Ascending aorta (tissue), 2 donors: ENCODE measurements at regions of chr10 and their contacts with region 1.

Region 1: GRCh38 chr10:95246579-95247051 is 44.2 kb downstream of the PDLIM1 start:
- DNase-seq: peak in 1 of 2 donors; percentile 89
- H3K4me3 ChIP-seq: no peak overlapping the region
- H3K27ac ChIP-seq: peak overlapping the region; percentile 70 to 82
- H3K4me1 ChIP-seq: peaks cover 8 to 46% of the 10 kb centered on the region in 2 donors
- H3K27me3 ChIP-seq: no peaks in the 10 kb centered on the region
- CTCF ChIP-seq: peak; percentile 62 to 73 (median 67)

Region 2: GRCh38 chr10:95183271-95184230 is 63.1 kb before region 1 on chr10:
- intact Hi-C with region 1: loop called (anchors 2 kb)
- DNase-seq: peak in 1 of 2 donors; percentile 92
- H3K4me3 ChIP-seq: peak overlapping the region; percentile 75 to 79
- H3K27ac ChIP-seq: peak overlapping the region; percentile 81 to 85
- H3K4me1 ChIP-seq: no peaks in the 10 kb centered on the region
- H3K27me3 ChIP-seq: no peaks in the 10 kb centered on the region
- CTCF ChIP-seq: peak; percentile 91 to 95 (median 93)

Region 3: DNA sequence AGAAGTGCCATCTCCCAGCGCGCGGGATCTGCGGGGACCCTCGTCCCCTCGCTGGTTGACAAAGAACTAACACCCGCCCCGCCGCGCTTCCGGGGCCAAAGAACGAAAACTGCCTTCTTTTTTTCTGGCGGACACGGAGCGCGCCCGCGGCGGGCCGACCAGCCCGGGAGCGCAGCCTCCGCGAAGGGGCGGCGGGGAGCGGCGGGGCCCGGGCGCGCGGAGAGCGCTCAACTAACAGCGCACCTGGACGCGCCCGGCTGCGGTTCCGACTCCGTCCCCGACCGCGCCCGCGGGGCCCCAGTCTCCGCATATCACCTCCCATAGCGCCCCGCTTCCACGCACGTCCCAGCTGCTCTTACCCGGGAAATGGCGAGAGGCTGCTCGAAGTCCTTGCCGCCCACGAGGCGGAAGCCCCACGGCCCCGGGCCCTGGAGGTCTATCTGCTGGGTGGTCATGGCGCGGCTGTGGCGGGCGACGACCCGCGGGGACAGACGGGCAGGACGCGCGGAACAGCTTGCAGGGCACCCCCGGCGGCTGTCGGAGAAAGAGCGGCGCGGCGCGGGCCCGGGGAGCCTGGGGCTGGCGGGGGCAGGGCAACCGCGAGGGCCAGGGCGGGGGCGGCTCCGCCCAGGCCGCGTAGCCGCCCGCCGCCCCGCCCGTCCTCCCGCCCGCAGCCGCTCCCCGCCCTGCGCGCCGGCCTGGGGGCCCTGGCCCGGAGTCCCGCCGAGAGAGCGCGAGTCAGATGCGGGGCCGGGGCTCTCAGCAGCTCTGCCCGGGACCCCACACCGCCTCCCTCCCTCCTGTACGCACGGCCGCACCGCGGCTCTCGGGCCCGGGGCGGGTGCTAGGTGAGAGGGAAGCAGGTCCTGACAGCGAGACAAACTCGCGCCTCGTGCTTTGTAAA is 44.1 kb after region 1 on chr10 and contains the start of gene PDLIM1:
- intact Hi-C with region 1: loop called (anchors 1 kb)
- DNase-seq: peak in 1 of 2 donors; percentile 86
- H3K4me3 ChIP-seq: peak within 1 kb of the TSS; percentile 98 to 99
- H3K27ac ChIP-seq: peak within 1 kb of the TSS; percentile 88 to 89
- H3K4me1 ChIP-seq: peaks cover 8 to 35% of the 10 kb centered on the region in 2 donors
- H3K27me3 ChIP-seq: no peaks in the 10 kb centered on the region
- CTCF ChIP-seq: peak; percentile 29 to 69 (median 44)
- total RNA-seq, gene PDLIM1: 191 TPM

Region 4: GRCh38 chr10:95334805-95335144 is 88.2 kb after region 1 on chr10:
- intact Hi-C with region 1: loop called (anchors 5 kb)
- DNase-seq: no peak
- H3K4me3 ChIP-seq: peak overlapping the region in 1 of 2 donors; percentile 23
- H3K27ac ChIP-seq: peak overlapping the region; percentile 96 to 97
- H3K4me1 ChIP-seq: peaks cover 29 to 61% of the 10 kb centered on the region in 2 donors
- H3K27me3 ChIP-seq: no peaks in the 10 kb centered on the region
- CTCF ChIP-seq: no peak

Region 5: DNA sequence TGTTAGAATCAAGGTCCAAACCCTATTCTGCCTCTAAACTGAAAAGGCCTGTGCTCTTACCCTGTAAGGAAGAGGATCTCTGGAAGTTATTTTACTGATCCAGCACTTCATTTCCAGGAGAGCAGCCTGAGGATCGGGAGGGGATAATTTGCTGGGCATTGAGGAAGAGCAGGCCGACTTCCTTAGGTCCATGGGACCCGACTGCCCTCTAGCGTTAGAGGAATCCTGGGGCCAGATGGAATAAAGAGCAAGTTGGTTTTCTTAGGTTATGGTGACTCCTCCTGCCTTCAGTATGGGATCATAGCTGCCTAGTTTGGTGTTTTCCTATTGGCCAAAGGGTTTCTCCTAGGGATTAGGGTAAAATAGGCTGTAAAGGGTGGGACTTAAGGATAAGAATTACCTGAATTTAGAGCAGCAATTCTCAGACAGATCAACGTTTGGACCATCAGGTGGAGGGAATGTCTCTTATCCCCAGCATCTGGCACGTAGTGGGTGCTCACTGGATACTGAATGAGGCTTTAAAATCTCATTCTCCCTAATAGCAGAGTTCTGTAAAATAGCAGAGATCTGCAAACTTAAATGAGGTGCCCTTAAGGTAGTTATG is 354.6 kb after region 1 on chr10:
- intact Hi-C with region 1: loop called (anchors 5 kb)
- DNase-seq: peak in 1 of 2 donors; percentile 92
- H3K4me3 ChIP-seq: no peak overlapping the region
- H3K27ac ChIP-seq: peak overlapping the region; percentile 10 to 23
- H3K4me1 ChIP-seq: peaks cover 6 to 25% of the 10 kb centered on the region in 2 donors
- H3K27me3 ChIP-seq: no peaks in the 10 kb centered on the region
- CTCF ChIP-seq: peak; percentile 89 to 93 (median 89)

Region 6: DNA sequence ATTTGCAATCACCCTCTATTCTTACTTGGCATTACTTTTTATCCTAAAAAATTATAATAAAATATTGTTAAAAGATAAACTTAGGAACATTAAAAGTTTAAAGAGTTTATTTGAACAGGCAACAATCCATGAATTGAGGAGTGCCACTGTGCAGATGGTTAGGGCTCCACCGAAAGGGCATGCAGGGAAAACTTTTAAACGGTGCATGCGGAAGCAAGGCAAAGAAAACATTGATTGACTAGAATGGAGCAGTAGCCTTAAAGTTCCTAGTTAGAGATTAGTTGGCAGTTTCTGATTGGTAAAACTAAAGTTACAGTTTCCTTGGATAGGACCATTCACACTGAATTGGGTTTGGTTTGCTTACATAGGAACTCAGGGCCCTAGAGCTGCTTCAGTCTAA is 678.4 kb after region 1 on chr10:
- intact Hi-C with region 1: no loop called
- DNase-seq: no peak
- H3K4me3 ChIP-seq: no peak overlapping the region
- H3K27ac ChIP-seq: no peak overlapping the region
- H3K4me1 ChIP-seq: no peaks in the 10 kb centered on the region
- H3K27me3 ChIP-seq: no peaks in the 10 kb centered on the region
- CTCF ChIP-seq: no peak

Region 7: GRCh38 chr10:96740579-96741281 is 1494.1 kb after region 1 on chr10:
- intact Hi-C with region 1: no loop called
- DNase-seq: peak in 1 of 2 donors; percentile 73
- H3K4me3 ChIP-seq: no peak overlapping the region
- H3K27ac ChIP-seq: no peak overlapping the region
- H3K4me1 ChIP-seq: no peaks in the 10 kb centered on the region
- H3K27me3 ChIP-seq: no peaks in the 10 kb centered on the region
- CTCF ChIP-seq: no peak